Body of pancreas (tissue), 4 donors: ENCODE measurements at regions of chr10 and their contacts with region 1.

Region 1: GRCh38 chr10:95133016-95133752 is 60.9 kb upstream of the ACSM6 start:
- DNase-seq: peak; percentile 88 to 92 (median 91)
- ATAC-seq: peak; percentile 96
- H3K4me3 ChIP-seq: no peak overlapping the region
- H3K27ac ChIP-seq: no peak overlapping the region
- H3K4me1 ChIP-seq: peaks cover 10% of the 10 kb centered on the region
- H3K27me3 ChIP-seq: no peaks in the 10 kb centered on the region
- CTCF ChIP-seq: peak; percentile 59 to 96 (median 91)
- POLR2A ChIP-seq: no peak

Region 2: GRCh38 chr10:95363303-95363912 is 230.2 kb after region 1 on chr10:
- intact Hi-C with region 1: loop called (anchors 5 kb)
- DNase-seq: peak; percentile 55 to 71 (median 58)
- ATAC-seq: peak; percentile 81
- H3K4me3 ChIP-seq: no peak overlapping the region
- H3K27ac ChIP-seq: no peak overlapping the region
- H3K4me1 ChIP-seq: peaks cover 10% of the 10 kb centered on the region
- H3K27me3 ChIP-seq: no peaks in the 10 kb centered on the region
- CTCF ChIP-seq: peak; percentile 73 to 91 (median 89)
- POLR2A ChIP-seq: no peak